Vagina (tissue), 2 donors: ENCODE measurements at regions of chr16 and their contacts with region 1.

Region 1: GRCh38 chr16:9818702-9819101 is 363.5 kb downstream of the GRIN2A start:
- DNase-seq: no peak
- H3K4me3 ChIP-seq: no peak overlapping the region
- H3K27ac ChIP-seq: no peak overlapping the region
- H3K4me1 ChIP-seq: no peaks in the 10 kb centered on the region
- H3K27me3 ChIP-seq: no peaks in the 10 kb centered on the region
- CTCF ChIP-seq: no peak
- POLR2A ChIP-seq: no peak

Region 2: DNA sequence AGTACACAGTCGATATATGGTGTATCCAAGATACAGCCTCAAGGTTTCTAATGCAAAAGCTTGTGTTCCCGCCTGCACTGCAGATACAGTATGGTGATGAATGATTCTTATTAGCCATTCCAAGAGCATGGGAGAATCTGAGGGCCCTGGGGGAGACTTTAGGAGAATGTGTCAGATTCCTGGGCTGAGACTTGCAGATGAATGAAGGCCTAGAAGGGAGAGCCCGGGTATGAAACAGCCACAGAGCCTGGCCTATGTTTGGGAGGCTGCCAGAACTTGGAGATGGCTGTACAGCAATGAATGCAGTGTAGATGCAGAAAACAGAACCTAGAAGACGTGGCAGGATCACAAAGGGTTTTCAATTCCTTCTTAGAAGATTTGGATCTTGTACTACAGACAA is 216.5 kb before region 1 on chr16:
- intact Hi-C with region 1: no loop called
- DNase-seq: no peak
- H3K4me3 ChIP-seq: no peak overlapping the region
- H3K27ac ChIP-seq: no peak overlapping the region
- H3K4me1 ChIP-seq: no peaks in the 10 kb centered on the region
- H3K27me3 ChIP-seq: no peaks in the 10 kb centered on the region
- CTCF ChIP-seq: no peak
- POLR2A ChIP-seq: no peak

Region 3: DNA sequence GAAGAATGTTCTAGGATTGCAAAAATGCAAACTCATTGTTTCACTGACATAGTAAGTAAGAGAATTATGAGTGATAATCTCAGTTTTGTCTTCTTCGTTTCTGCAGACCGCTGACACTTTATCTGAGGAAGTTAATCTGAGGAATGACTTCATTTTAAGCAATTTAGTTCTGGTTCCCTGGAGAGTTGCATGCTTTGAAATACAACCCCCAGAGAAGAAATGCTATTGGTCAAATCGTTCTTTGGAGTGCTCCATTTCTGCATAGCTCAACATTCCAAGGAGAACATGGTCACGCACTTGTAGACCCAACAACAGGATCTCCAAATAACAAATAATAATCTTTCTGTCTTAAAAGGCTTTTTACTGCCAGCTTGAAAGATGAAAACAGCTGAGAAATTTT is 63.6 kb before region 1 on chr16:
- intact Hi-C with region 1: loop called (anchors 2 kb)
- DNase-seq: no peak
- H3K4me3 ChIP-seq: no peak overlapping the region
- H3K27ac ChIP-seq: no peak overlapping the region
- H3K4me1 ChIP-seq: no peaks in the 10 kb centered on the region
- H3K27me3 ChIP-seq: no peaks in the 10 kb centered on the region
- CTCF ChIP-seq: no peak
- POLR2A ChIP-seq: no peak

Region 4: GRCh38 chr16:9859701-9860327 is 41.1 kb after region 1 on chr16:
- intact Hi-C with region 1: no loop called
- DNase-seq: no peak
- H3K4me3 ChIP-seq: no peak overlapping the region
- H3K27ac ChIP-seq: no peak overlapping the region
- H3K4me1 ChIP-seq: no peaks in the 10 kb centered on the region
- H3K27me3 ChIP-seq: no peaks in the 10 kb centered on the region
- CTCF ChIP-seq: no peak
- POLR2A ChIP-seq: no peak